Activated CD4-positive, alpha-beta T cell treated with anti-CD3 and anti-CD28 coated beads for 36 hours (primary cell): ENCODE measurements at regions of chr1 and their contacts with region 1.

Region 1: DNA sequence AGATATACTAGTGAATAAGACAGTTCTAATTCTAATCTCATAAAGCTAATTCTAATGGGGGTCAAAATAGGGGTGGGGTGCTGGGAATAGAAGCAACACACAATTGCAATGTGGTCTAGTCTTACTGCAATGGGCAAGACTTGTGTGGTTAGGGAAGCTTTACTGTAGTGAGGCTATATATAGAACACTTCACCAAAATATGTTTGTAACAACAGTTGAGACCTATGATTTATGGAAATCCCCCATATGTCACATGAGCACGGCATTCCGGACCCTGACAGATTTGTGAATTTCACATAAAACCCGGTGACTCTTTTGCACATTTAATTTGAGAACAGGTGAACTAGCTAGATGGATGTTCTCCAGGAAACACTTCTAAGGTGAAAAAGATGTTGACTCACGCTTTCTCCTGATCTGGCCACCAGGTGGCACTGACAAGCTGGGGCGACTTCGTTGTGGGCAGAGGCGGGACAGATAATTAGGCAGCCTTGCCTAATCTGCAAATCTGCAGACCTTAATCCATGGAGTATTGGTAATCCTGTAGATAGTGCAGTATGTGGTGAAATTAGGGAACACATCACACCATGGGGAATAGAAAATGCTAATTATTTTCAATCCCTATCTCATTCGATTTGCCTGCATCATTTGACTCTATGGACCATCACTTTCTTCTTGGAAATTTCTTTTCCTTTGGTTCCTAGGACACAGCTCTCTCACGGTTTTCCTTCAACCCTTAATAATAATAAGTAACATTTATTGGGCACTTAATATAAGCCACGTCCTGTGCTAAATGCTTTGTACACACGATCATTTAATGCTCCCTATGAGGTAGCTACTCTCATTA is 37.7 kb downstream of the KIAA0040 start:
- DNase-seq: peak; percentile 87
- ATAC-seq: peak; percentile 43
- H3K4me3 Mint-ChIP-seq: no peak overlapping the region
- H3K27ac Mint-ChIP-seq: no peak overlapping the region
- H3K4me1 Mint-ChIP-seq: peaks cover 23% of the 10 kb centered on the region
- H3K27me3 Mint-ChIP-seq: peaks cover 28% of the 10 kb centered on the region

Region 2: DNA sequence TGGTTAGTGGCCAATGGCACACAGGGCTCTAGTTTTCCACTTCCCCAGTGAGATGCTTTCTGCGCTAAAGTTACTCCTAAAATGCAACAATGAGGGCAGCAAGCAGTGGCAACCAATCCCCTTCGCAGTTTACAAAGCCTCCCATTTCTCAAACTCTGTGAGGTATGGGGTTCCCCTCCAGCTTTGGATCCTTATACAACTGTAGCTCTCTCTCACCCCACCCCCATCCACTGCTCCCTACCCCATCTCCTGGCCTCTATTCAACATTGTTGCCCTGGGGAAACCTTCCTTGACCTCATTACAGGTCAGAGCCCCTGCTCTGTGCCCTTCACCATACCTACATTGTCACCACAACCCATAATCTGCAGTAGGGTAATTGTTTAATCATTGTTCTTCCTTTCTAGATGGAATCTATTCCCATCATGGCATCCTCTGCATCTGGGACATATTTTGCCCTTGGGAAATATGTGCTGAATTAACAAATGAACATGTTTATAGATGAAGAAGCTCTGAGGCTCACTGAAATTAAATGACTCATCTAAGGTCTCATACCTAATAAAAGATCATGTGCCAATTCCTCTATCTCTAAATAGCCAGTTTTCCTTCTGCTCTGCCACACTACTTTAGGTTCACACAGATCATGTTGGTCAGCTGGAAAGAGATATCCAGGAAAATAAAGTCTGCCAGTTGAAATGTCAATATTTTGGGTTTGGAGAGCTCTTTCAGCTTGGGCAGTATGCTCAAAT is 25.2 kb after region 1 on chr1:
- CTCF ChIA-PET with region 1: interaction called, 11 read pairs
- POLR2A ChIA-PET with region 1: interaction called, 3 read pairs
- intact Hi-C with region 1: no loop called
- DNase-seq: no peak
- ATAC-seq: no peak
- H3K4me3 Mint-ChIP-seq: no peak overlapping the region
- H3K27ac Mint-ChIP-seq: no peak overlapping the region
- H3K4me1 Mint-ChIP-seq: peaks cover 62% of the 10 kb centered on the region
- H3K27me3 Mint-ChIP-seq: no peaks in the 10 kb centered on the region

Region 3: DNA sequence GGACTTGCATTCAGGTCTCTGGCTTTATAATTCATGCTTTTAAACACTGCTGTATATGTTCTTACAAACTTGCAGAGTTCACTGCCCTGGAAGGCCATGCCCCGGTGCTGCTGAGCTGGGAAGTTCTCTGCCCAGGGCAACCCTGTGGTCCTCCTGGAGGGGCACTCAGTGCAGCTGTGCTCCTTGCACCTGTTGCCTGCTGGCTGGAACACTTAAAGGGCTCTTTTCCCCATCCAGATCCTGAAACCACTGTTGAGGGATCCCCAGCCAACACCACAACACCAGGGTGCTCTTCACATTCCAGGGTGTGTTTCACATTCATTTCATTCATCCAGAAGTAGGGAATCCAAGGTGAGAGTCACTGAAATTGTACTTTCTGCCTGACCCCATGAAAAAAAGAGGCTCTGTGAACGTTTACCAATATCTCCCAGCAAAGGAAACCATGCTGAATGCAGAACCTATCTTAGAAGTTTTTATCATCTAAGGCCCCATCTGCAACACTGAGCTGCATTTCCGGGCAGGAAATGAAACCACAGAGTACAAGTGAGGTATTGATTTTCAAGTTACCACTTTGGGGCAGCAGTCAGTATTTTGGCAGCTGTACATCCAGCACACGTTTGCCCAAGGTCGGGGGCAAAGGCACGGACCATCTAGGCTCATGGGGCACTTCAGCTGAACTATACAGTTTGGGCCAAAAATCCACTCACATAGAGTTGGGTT is 54.1 kb after region 1 on chr1:
- CTCF ChIA-PET with region 1: interaction called, 10 read pairs
- POLR2A ChIA-PET with region 1: no interaction called
- intact Hi-C with region 1: no loop called
- DNase-seq: peak; percentile 58
- ATAC-seq: peak; percentile 60
- H3K4me3 Mint-ChIP-seq: peak overlapping the region; percentile 55
- H3K27ac Mint-ChIP-seq: peak overlapping the region; percentile 94
- H3K4me1 Mint-ChIP-seq: peaks cover 63% of the 10 kb centered on the region
- H3K27me3 Mint-ChIP-seq: no peaks in the 10 kb centered on the region

Region 4: DNA sequence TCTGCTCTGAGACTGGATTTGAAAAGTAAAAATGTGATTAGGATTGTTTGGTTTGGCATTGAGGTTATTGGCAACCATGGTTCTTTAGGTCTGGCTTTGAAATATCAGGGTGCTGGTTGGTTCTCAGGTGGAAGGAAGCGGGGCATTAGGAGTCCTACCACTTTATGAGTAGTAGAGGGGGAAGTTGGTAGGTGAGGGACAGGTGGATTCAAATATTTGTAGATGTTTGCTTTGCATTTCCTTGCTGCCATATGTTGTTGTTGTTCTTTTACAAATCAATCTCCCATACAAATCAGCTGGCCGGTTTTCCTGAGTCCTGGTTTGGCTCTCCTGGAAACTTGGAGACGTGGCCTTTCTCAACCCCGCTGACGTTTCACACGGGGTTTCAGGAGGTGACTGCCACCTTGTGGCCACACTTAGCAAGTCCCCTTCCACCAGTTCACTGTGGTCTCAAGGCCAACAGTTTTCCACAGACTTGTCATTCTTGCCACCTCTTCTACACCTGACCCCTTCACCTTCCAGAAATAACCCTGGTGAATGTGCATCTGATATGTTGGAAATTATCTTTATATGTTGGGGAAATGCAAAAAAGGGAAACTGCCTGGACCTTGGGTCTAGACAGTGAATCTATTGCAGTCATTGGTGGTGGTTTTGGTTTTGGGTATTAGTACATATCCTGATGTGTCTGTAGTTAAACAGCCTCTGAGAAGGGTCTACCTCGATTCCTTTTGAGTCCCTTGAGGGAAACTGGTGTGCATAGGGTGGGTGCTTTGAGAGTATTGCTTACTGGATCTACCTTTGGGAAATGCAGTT is 164.8 kb after region 1 on chr1:
- CTCF ChIA-PET with region 1: interaction called, 322 read pairs
- POLR2A ChIA-PET with region 1: interaction called, 4 read pairs
- intact Hi-C with region 1: loop called (anchors 1 kb)
- DNase-seq: peak; percentile 82
- ATAC-seq: peak; percentile 89
- H3K4me3 Mint-ChIP-seq: no peak overlapping the region
- H3K27ac Mint-ChIP-seq: no peak overlapping the region
- H3K4me1 Mint-ChIP-seq: peaks cover 12% of the 10 kb centered on the region
- H3K27me3 Mint-ChIP-seq: peaks cover 2% of the 10 kb centered on the region

Region 5: GRCh38 chr1:175481126-175482066 is 326.5 kb after region 1 on chr1:
- CTCF ChIA-PET with region 1: interaction called, 3 read pairs
- POLR2A ChIA-PET with region 1: no interaction called
- intact Hi-C with region 1: loop called in 1 of 2 experiments (anchors 5 kb)
- DNase-seq: no peak
- ATAC-seq: no peak
- H3K4me3 Mint-ChIP-seq: no peak overlapping the region
- H3K27ac Mint-ChIP-seq: no peak overlapping the region
- H3K4me1 Mint-ChIP-seq: no peaks in the 10 kb centered on the region
- H3K27me3 Mint-ChIP-seq: peaks cover 21% of the 10 kb centered on the region